CD4-positive, alpha-beta memory T cell (primary cell): ENCODE measurements at regions of chr13 and their contacts with region 1.

Region 1: DNA sequence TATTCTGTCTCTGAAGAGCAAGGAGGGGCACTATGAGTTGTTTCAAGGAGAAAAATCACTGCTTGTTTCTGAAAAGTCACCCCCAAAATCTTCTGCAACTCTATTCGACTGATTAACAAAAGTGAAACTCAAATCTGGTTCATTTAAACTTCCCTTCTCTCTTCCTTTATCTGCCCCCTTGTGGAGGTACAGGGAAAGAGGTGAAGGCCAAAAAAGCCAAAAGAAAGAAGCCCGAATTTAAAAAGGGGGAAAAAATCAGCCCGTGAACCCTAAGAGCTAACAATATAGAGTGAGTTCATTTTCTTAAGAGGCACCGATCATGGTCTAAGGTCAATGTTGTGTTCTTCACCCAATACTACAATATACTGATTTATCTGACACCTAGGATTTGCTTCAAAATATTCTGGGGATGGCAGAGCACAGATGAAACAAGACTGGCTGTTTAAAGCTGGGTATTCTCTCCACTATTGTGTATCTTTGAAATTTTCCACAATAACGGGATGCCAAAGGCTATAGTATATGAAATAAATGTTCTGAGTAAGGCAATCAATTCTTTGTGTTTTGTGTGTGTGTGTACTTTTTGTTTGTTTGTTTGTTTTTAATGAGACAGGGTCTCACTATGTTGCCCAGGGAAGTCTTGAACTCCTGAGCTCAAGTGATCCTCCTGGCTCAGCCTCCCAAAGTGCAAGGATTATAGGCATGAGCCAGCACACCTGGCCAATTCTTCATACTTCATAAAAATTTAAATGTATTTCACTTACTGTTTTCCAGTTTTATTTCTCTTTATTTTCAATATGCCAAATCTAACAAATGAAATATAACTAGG is 55.0 kb upstream of the EEF1AKMT1 start:
- DNase-seq: peak; percentile 52 to 72 (median 65)
- H3K4me3 ChIP-seq: no peak overlapping the region
- H3K4me3 Mint-ChIP-seq: peak overlapping the region; percentile 4 to 78 (median 48)
- H3K27ac ChIP-seq: no peak overlapping the region
- H3K27ac Mint-ChIP-seq: peak overlapping the region; percentile 3 to 91 (median 83)
- H3K4me1 ChIP-seq: peaks cover 11% of the 10 kb centered on the region
- H3K4me1 Mint-ChIP-seq: peaks cover 6 to 14% (median 9%) of the 10 kb centered on the region in 4 donors
- H3K27me3 ChIP-seq: no peaks in the 10 kb centered on the region
- H3K27me3 Mint-ChIP-seq: no peaks in the 10 kb centered on the region

Region 2: DNA sequence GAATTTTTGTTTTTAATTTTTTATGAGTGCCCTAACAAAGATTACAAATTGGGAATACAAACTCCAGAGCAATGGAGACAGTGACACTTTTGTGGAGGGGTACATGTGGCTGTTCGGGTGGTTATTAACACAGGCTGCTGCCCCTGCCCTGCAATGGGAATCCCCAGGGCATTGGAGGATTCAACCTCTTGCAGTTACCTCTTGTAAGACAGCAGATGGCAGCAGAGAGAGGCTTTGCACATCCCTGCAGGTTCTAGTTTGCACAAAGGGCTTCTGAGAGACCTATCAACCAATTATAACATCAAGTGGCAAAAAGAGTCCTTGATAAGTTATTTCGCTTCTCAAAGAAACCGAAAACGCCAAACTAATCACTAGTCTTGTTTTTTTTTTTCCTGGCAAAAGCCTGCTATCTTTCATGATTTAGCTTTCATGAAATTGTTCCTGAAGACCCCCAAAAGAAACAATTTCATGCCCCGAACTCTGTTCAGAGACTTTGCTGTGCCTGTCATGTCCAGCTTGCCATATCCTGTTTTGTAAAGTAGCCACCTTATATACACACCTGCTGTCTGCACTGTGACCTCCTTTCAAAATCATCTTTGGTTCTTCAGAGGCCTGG is 646.4 kb before region 1 on chr13:
- CTCF ChIA-PET with region 1: interaction called, 3 read pairs
- POLR2A ChIA-PET with region 1: no interaction called
- intact Hi-C with region 1: loop called (anchors 1 kb)
- DNase-seq: peak in 4 of 5 donors; percentile 63 to 73 (median 68)
- H3K4me3 ChIP-seq: no peak overlapping the region
- H3K4me3 Mint-ChIP-seq: no peak overlapping the region
- H3K27ac ChIP-seq: no peak overlapping the region
- H3K27ac Mint-ChIP-seq: no peak overlapping the region
- H3K4me1 ChIP-seq: no peaks in the 10 kb centered on the region
- H3K4me1 Mint-ChIP-seq: peaks cover 0 to 2% (median 0%) of the 10 kb centered on the region in 4 donors
- H3K27me3 ChIP-seq: peaks cover 7% of the 10 kb centered on the region
- H3K27me3 Mint-ChIP-seq: peaks cover 25 to 34% of the 10 kb centered on the region in 2 donors

Region 3: GRCh38 chr13:20495082-20496023 is 333.4 kb before region 1 on chr13:
- CTCF ChIA-PET with region 1: interaction called, 151 read pairs
- POLR2A ChIA-PET with region 1: no interaction called
- intact Hi-C with region 1: loop called (anchors 1 kb)
- DNase-seq: peak; percentile 62 to 70 (median 68)
- H3K4me3 ChIP-seq: no peak overlapping the region
- H3K4me3 Mint-ChIP-seq: no peak overlapping the region
- H3K27ac ChIP-seq: no peak overlapping the region
- H3K27ac Mint-ChIP-seq: peak overlapping the region in 1 of 7 donors; percentile 32
- H3K4me1 ChIP-seq: peaks cover 6% of the 10 kb centered on the region
- H3K4me1 Mint-ChIP-seq: peaks cover 0 to 7% (median 2%) of the 10 kb centered on the region in 4 donors
- H3K27me3 ChIP-seq: no peaks in the 10 kb centered on the region
- H3K27me3 Mint-ChIP-seq: no peaks in the 10 kb centered on the region

Region 4: DNA sequence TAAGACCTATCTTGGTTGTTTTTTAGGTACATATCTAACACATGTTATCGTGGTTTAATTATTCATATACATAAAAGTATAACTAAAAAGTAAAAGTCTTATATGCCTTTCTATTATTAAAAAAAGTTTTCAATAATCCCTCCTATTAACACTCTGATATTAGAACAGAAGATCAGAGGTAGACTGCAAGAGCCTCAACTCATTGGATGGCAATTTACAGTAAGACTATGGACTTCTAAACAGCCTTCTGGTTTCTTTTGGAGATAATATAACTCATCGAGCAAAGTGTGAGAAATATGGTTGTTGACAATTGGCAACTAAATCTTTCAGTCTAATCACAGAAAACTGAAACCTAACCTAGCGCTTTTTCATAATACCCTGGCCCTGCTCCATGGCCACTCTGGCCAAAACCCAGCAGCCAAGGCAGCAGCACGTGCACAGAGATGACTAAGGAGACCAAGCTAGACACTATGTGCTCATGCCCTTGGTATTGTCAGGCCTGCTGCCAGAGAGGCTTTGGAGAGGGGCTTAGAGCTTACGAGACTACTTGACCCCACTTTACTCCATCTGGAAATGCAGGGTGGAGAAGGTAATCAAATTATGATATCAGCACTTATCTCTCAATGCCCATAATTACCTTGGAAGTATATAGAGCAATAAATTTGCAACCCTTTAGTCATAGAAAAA is 14.4 kb before region 1 on chr13:
- CTCF ChIA-PET with region 1: interaction called, 17 read pairs
- POLR2A ChIA-PET with region 1: no interaction called
- intact Hi-C with region 1: no loop called
- DNase-seq: no peak
- H3K4me3 ChIP-seq: no peak overlapping the region
- H3K4me3 Mint-ChIP-seq: no peak overlapping the region
- H3K27ac ChIP-seq: no peak overlapping the region
- H3K27ac Mint-ChIP-seq: no peak overlapping the region
- H3K4me1 ChIP-seq: no peaks in the 10 kb centered on the region
- H3K4me1 Mint-ChIP-seq: peaks cover 0 to 14% (median 7%) of the 10 kb centered on the region in 4 donors
- H3K27me3 ChIP-seq: no peaks in the 10 kb centered on the region
- H3K27me3 Mint-ChIP-seq: no peaks in the 10 kb centered on the region

Region 5: GRCh38 chr13:20847296-20847695 is 18.5 kb after region 1 on chr13:
- CTCF ChIA-PET with region 1: interaction called, 21 read pairs
- POLR2A ChIA-PET with region 1: interaction called, 3 read pairs
- intact Hi-C with region 1: no loop called
- DNase-seq: no peak
- H3K4me3 ChIP-seq: no peak overlapping the region
- H3K4me3 Mint-ChIP-seq: no peak overlapping the region
- H3K27ac ChIP-seq: no peak overlapping the region
- H3K27ac Mint-ChIP-seq: peak overlapping the region in 3 of 7 donors; percentile 31 to 42 (median 37)
- H3K4me1 ChIP-seq: no peaks in the 10 kb centered on the region
- H3K4me1 Mint-ChIP-seq: peaks cover 0 to 5% (median 2%) of the 10 kb centered on the region in 4 donors
- H3K27me3 ChIP-seq: no peaks in the 10 kb centered on the region
- H3K27me3 Mint-ChIP-seq: no peaks in the 10 kb centered on the region

Region 6: GRCh38 chr13:21106089-21106488 is 277.3 kb after region 1 on chr13:
- CTCF ChIA-PET with region 1: no interaction called
- POLR2A ChIA-PET with region 1: no interaction called
- intact Hi-C with region 1: no loop called
- DNase-seq: no peak
- H3K4me3 ChIP-seq: no peak overlapping the region
- H3K4me3 Mint-ChIP-seq: no peak overlapping the region
- H3K27ac ChIP-seq: no peak overlapping the region
- H3K27ac Mint-ChIP-seq: no peak overlapping the region
- H3K4me1 ChIP-seq: peaks cover 3% of the 10 kb centered on the region
- H3K4me1 Mint-ChIP-seq: peaks cover 0 to 5% (median 2%) of the 10 kb centered on the region in 4 donors
- H3K27me3 ChIP-seq: no peaks in the 10 kb centered on the region
- H3K27me3 Mint-ChIP-seq: peaks cover 0 to 1% of the 10 kb centered on the region in 2 donors